ENCODE measurements at regions of chr10 and their contacts with region 1.

Region 1: GRCh38 chr10:73997787-73998622 is at the start of gene VCL:
- DNase-seq: peak; percentile 95 to 96 (median 95)
- H3K4me3 ChIP-seq: peak within 1 kb of the TSS; percentile 76 to 94
- H3K4me3 Mint-ChIP-seq: peak within 1 kb of the TSS; percentile 99 to 100 (median 100)
- H3K27ac ChIP-seq: peak within 1 kb of the TSS; percentile 87
- H3K27ac Mint-ChIP-seq: peak within 1 kb of the TSS; percentile 81 to 100 (median 99)
- H3K4me1 ChIP-seq: peaks cover 57% of the 10 kb centered on the region
- H3K4me1 Mint-ChIP-seq: peaks cover 33 to 69% (median 51%) of the 10 kb centered on the region in 4 donors
- H3K27me3 ChIP-seq: no peaks in the 10 kb centered on the region
- H3K27me3 Mint-ChIP-seq: no peaks in the 10 kb centered on the region
- total RNA-seq, gene VCL: 29.6 TPM

Region 2: GRCh38 chr10:73922007-73922863 is 75.8 kb before region 1 on chr10:
- CTCF ChIA-PET with region 1: no interaction called
- POLR2A ChIA-PET with region 1: no interaction called
- intact Hi-C with region 1: no loop called
- DNase-seq: peak; percentile 63 to 76 (median 68)
- H3K4me3 ChIP-seq: no peak overlapping the region
- H3K4me3 Mint-ChIP-seq: peak overlapping the region in 7 of 8 donors; percentile 61 to 83 (median 76)
- H3K27ac ChIP-seq: no peak overlapping the region
- H3K27ac Mint-ChIP-seq: peak overlapping the region in 3 of 7 donors; percentile 1 to 73 (median 18)
- H3K4me1 ChIP-seq: peaks cover 32% of the 10 kb centered on the region
- H3K4me1 Mint-ChIP-seq: peaks cover 19 to 36% (median 25%) of the 10 kb centered on the region in 4 donors
- H3K27me3 ChIP-seq: no peaks in the 10 kb centered on the region
- H3K27me3 Mint-ChIP-seq: peaks cover 4 to 14% of the 10 kb centered on the region in 2 donors

Region 3: DNA sequence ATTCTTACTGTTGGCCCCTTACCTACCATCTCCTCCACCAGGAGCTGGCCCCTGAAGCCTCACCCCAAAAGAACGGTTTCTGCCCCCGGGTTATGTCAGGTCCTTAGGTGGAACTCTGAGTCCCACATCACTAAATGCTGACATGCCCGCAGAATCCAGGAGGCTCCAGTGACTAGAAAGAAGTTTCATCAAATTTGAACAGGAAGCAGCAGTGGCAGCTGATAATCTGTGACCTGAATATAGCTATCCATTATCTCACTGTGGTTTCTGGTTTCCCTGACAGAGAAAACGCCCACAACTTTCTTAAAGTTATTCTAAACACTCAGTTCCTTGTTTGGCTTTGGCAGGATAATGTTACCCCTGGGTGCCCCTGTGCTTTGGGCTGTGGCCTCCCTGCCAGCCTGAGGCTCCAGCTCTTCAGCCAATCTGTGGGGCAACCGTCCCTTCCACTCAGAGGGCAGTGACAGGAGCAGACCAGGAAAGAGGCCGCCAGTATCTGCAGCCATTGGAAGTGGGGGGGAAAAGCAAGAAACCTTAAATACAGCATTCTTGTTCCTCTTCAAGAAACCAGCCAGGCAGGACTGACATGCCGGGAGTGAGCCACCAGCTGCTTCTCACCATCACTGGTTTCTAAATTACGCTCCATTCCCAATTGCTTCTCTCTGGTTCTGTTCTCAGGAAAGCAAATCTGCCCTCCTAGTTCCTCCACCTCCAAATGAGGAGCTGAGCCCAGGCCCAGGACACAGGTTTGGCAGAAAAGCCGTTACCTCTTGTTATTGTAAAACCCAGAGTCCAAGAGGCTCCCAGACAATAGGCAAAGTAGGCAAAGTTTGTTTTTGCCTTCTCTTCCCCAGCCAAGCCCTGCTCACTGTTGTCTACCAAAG is 41.3 kb before region 1 on chr10:
- CTCF ChIA-PET with region 1: interaction called, 41 read pairs
- POLR2A ChIA-PET with region 1: interaction called, 40 read pairs
- intact Hi-C with region 1: loop called (anchors 1 kb)
- DNase-seq: peak; percentile 64 to 78 (median 72)
- H3K4me3 ChIP-seq: peak overlapping the region; percentile 4 to 30
- H3K4me3 Mint-ChIP-seq: peak overlapping the region; percentile 66 to 94 (median 86)
- H3K27ac ChIP-seq: peak overlapping the region; percentile 52
- H3K27ac Mint-ChIP-seq: peak overlapping the region; percentile 94 to 99 (median 97)
- H3K4me1 ChIP-seq: peaks cover 70% of the 10 kb centered on the region
- H3K4me1 Mint-ChIP-seq: peaks cover 43 to 64% (median 54%) of the 10 kb centered on the region in 4 donors
- H3K27me3 ChIP-seq: no peaks in the 10 kb centered on the region
- H3K27me3 Mint-ChIP-seq: no peaks in the 10 kb centered on the region

Region 4: DNA sequence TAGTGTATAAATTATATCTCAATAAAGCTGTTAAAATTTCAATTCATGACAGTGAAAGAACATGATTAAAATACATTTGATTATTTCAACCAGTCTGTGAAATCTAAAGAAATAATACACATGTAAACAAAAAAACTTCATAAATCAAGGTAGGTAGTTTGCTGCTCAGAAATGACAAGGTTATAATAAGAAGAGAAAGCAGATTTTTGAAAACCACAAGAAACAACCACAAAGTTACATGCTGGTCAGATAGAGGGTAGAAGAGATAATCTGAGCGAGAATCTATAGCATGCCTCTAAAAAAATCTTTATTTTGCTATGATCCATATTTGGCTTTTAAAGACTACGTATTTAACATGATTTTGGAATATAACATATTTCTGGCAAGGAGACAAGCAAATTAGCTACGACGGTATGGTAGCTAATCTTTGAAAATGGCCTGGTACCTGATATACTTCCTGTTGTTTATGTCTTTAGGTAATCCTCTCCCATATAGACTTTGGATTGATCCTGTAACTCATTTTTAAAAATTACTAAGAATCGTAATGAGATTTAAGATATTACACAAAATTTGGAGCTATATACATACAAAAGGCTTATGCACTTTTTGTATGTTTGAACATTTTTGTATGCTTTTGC is 23.6 kb before region 1 on chr10:
- CTCF ChIA-PET with region 1: interaction called, 4 read pairs
- POLR2A ChIA-PET with region 1: interaction called, 11 read pairs
- intact Hi-C with region 1: loop called (anchors 2 kb)
- DNase-seq: peak in 4 of 5 donors; percentile 43 to 60 (median 48)
- H3K4me3 ChIP-seq: no peak overlapping the region
- H3K4me3 Mint-ChIP-seq: peak overlapping the region; percentile 21 to 70 (median 56)
- H3K27ac ChIP-seq: no peak overlapping the region
- H3K27ac Mint-ChIP-seq: peak overlapping the region; percentile 1 to 75 (median 37)
- H3K4me1 ChIP-seq: peaks cover 24% of the 10 kb centered on the region
- H3K4me1 Mint-ChIP-seq: peaks cover 15 to 37% (median 22%) of the 10 kb centered on the region in 4 donors
- H3K27me3 ChIP-seq: no peaks in the 10 kb centered on the region
- H3K27me3 Mint-ChIP-seq: no peaks in the 10 kb centered on the region

Region 5: GRCh38 chr10:74011770-74012169 is 13.8 kb after region 1 on chr10:
- CTCF ChIA-PET with region 1: interaction called, 3 read pairs
- POLR2A ChIA-PET with region 1: interaction called, 12 read pairs
- intact Hi-C with region 1: no loop called
- DNase-seq: no peak
- H3K4me3 ChIP-seq: no peak overlapping the region
- H3K4me3 Mint-ChIP-seq: peak overlapping the region in 4 of 8 donors; percentile 13 to 55 (median 27)
- H3K27ac ChIP-seq: no peak overlapping the region
- H3K27ac Mint-ChIP-seq: peak overlapping the region in 3 of 7 donors; percentile 12 to 73 (median 59)
- H3K4me1 ChIP-seq: peaks cover 51% of the 10 kb centered on the region
- H3K4me1 Mint-ChIP-seq: peaks cover 37 to 63% (median 45%) of the 10 kb centered on the region in 4 donors
- H3K27me3 ChIP-seq: no peaks in the 10 kb centered on the region
- H3K27me3 Mint-ChIP-seq: no peaks in the 10 kb centered on the region

Region 6: DNA sequence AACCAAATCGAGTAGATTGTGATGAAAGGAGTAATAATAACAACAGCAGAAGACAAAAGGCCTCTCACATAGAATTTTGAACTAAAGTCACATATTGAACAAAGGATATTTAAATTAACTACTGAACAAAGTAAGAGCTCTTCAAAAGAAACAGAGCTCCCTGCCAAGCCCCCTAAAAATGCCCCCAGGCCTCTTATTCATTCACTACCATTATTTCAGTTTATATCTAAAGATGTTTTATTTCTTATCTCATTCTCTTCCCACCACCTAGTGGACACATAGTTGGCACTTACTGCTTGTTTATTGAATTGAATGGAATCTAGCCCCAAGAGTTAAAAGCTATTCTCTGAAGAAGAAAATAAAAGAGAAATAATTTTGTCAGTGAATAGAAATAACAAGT is 37.3 kb after region 1 on chr10:
- CTCF ChIA-PET with region 1: interaction called, 4 read pairs
- POLR2A ChIA-PET with region 1: no interaction called
- intact Hi-C with region 1: loop called (anchors 5 kb)
- DNase-seq: peak in 1 of 5 donors; percentile 14
- H3K4me3 ChIP-seq: no peak overlapping the region
- H3K4me3 Mint-ChIP-seq: no peak overlapping the region
- H3K27ac ChIP-seq: no peak overlapping the region
- H3K27ac Mint-ChIP-seq: peak overlapping the region in 6 of 7 donors; percentile 31 to 90 (median 80)
- H3K4me1 ChIP-seq: peaks cover 41% of the 10 kb centered on the region
- H3K4me1 Mint-ChIP-seq: peaks cover 43 to 64% (median 48%) of the 10 kb centered on the region in 4 donors
- H3K27me3 ChIP-seq: no peaks in the 10 kb centered on the region
- H3K27me3 Mint-ChIP-seq: no peaks in the 10 kb centered on the region

Region 7: DNA sequence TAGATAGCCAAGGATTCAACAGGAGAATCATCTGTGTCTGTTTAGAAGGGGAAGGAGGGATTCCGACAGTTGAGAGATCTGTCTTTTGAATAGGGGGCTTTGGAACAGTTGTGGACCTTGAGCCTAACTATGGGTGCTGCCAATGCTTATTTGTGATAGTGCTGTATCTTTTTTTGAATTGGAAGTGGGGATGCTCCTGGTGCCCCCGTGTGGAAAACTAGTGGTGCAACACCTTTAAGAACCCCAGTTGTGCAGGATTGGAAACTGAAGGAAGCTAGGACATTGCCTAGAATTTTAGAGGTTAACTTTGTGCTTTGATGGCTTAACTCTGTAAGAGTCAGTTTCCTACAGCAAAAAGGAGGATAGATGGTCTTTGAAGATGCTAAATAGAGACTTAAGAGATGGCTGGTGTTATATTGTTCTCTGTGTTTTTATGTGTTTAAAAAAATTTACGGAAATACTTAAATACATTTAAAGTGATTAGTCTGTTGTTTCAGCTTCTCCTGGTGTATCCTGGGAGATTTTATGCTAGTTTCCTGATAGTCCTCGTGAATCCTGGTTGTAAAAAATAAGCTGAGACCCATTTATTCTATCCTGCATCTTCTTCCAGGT is 83.3 kb after region 1 on chr10:
- CTCF ChIA-PET with region 1: no interaction called
- POLR2A ChIA-PET with region 1: interaction called, 6 read pairs
- intact Hi-C with region 1: loop called (anchors 1 kb)
- DNase-seq: peak in 4 of 5 donors; percentile 45 to 55 (median 49)
- H3K4me3 ChIP-seq: no peak overlapping the region
- H3K4me3 Mint-ChIP-seq: peak overlapping the region in 1 of 8 donors; percentile 1
- H3K27ac ChIP-seq: no peak overlapping the region
- H3K27ac Mint-ChIP-seq: peak overlapping the region in 6 of 7 donors; percentile 1 to 76 (median 25)
- H3K4me1 ChIP-seq: peaks cover 17% of the 10 kb centered on the region
- H3K4me1 Mint-ChIP-seq: peaks cover 22 to 48% (median 35%) of the 10 kb centered on the region in 4 donors
- H3K27me3 ChIP-seq: no peaks in the 10 kb centered on the region
- H3K27me3 Mint-ChIP-seq: no peaks in the 10 kb centered on the region

Region 8: GRCh38 chr10:74096777-74097176 is 98.8 kb after region 1 on chr10:
- CTCF ChIA-PET with region 1: no interaction called
- POLR2A ChIA-PET with region 1: no interaction called
- intact Hi-C with region 1: no loop called
- DNase-seq: no peak
- H3K4me3 ChIP-seq: no peak overlapping the region
- H3K4me3 Mint-ChIP-seq: no peak overlapping the region
- H3K27ac ChIP-seq: no peak overlapping the region
- H3K27ac Mint-ChIP-seq: peak overlapping the region in 4 of 7 donors; percentile 16 to 55 (median 32)
- H3K4me1 ChIP-seq: no peaks in the 10 kb centered on the region
- H3K4me1 Mint-ChIP-seq: peaks cover 0 to 3% (median under 1%) of the 10 kb centered on the region in 4 donors
- H3K27me3 ChIP-seq: no peaks in the 10 kb centered on the region
- H3K27me3 Mint-ChIP-seq: no peaks in the 10 kb centered on the region